ENCODE measurements at regions of chr21 and their contacts with region 1.

Region 1: GRCh38 chr21:17819114-17819876 is at the start of gene C21orf91:
- DNase-seq: peak; percentile 92
- H3K4me3 Mint-ChIP-seq: peak within 1 kb of the TSS; percentile 96
- H3K27ac Mint-ChIP-seq: peak within 1 kb of the TSS; percentile 98
- H3K4me1 Mint-ChIP-seq: peaks cover 39% of the 10 kb centered on the region
- H3K27me3 Mint-ChIP-seq: no peaks in the 10 kb centered on the region
- total RNA-seq, gene C21orf91: 25.6 to 25.8 TPM

Region 2: DNA sequence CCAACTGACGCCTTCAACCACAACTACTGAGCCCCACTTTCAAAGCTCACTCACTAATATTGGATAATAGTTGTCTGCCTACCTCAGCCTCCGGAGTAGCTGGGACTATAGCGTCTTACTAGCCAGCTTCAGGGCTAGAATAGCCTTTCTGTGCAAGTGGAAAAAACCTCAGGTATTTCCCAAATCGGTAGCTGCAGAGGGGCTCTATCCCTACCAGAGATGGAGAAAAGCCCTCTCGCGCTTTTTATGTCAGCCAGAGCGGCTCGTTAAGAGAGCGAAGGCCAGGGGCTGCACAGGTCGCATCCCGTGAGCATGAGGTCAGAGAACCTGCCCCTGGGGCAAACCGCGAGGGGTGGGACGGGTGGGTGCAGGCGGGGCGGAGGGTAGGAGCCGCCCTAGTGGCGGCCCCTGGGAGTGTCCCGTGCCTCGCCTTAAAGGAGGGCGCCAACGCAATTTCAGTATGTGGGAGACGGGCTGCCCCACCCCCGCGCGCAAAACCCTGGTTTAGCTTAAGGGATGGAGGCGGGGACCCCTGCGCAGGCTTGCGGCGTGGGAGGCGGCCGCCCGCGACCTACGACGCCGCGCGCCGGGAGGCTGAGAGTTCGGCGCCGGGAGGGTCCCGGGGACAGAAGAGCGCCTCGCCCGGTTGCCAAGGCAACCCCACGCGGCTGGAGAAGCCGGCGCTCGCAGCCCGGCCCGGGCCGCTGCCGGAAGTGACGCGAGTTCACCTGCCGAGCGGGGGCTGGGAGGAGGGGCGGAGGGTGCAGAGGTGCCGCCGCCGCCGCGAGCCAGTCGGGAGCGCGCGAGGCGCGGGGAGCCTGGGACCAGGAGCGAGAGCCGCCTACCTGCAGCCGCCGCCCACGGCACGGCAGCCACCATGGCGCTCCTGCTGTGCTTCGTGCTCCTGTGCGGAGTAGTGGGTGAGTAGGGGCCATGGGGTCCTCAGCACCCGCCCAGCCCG is 306.8 kb before region 1 on chr21 and contains the start of gene CXADR:
- CTCF ChIA-PET with region 1: no interaction called
- intact Hi-C with region 1: loop called (anchors 2 kb)
- DNase-seq: peak; percentile 81
- H3K4me3 Mint-ChIP-seq: peak within 1 kb of the TSS; percentile 80
- H3K27ac Mint-ChIP-seq: no peak within 1 kb of the TSS
- H3K4me1 Mint-ChIP-seq: peaks cover 14% of the 10 kb centered on the region
- H3K27me3 Mint-ChIP-seq: peaks cover 23% of the 10 kb centered on the region
- total RNA-seq, gene CXADR: 0.27 to 0.52 TPM

Region 3: GRCh38 chr21:17570786-17571185 is 248.5 kb before region 1 on chr21:
- CTCF ChIA-PET with region 1: no interaction called
- intact Hi-C with region 1: no loop called
- DNase-seq: no peak
- H3K4me3 Mint-ChIP-seq: no peak overlapping the region
- H3K27ac Mint-ChIP-seq: no peak overlapping the region
- H3K4me1 Mint-ChIP-seq: no peaks in the 10 kb centered on the region
- H3K27me3 Mint-ChIP-seq: peaks cover 4% of the 10 kb centered on the region

Region 4: DNA sequence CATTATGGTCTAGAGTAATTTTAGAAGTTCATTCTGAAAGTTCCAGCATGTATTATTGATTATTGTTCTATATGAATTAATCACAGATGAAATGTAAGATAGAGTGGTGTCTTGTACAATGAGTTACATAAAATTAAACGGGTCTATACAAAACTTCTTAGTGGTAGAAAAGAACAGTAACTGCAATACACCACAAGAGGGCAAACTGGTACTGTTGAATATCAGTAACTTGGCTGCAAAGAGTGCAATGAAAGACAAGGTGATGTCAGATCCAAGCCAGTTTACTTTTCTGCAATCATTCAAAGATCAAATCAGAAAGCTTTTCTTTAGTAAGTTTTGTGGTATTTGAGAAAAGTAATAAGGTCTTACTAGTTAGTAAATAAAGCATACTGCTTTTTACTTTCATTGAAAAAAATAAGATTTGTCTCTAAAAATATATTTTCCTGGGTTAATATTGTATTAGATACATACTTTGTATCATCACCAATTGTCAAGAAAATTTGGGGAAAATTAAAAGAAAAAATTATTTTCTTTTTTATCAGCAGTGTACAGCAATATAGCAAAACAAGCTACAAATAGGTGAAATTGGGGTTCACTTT is 140.2 kb before region 1 on chr21:
- CTCF ChIA-PET with region 1: interaction called, 4 read pairs
- intact Hi-C with region 1: loop called (anchors 2 kb)
- DNase-seq: no peak
- H3K4me3 Mint-ChIP-seq: no peak overlapping the region
- H3K27ac Mint-ChIP-seq: no peak overlapping the region
- H3K4me1 Mint-ChIP-seq: peaks cover 11% of the 10 kb centered on the region
- H3K27me3 Mint-ChIP-seq: no peaks in the 10 kb centered on the region

Region 5: DNA sequence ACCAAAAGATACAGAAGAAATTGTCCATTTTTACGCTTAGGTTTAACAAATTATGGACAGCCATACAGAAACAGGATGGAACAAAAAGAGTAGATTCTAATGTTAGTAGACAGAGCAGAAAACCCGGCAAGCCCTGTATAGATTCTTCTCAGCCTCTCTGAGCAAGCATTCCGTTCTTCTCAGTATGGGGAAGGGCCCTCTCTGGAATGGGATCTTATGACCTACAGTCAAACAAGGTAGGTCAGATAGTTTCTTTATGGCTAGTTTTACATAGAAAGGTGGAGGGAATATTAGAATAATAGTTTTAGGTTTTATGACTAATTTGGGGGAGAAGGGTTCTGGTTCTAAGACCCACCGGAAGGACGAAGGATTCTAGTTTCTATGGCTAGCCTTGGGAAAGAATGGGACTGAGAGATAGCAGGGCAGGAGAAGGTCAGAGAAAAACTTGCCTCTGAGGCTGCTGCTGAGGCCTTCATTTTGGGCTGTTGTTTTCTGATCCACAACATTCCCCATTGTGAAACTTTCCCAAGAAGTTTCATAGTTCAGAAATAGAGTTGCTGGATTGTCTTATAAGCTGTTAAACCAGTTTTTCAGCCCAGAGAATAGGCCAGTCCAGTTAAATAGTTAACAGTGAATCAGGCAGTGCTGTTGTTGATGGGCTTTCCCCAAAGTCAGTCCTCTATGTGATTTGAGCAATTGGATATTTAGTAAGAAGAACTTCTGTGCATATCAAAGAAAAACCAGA is 77.3 kb before region 1 on chr21:
- CTCF ChIA-PET with region 1: no interaction called
- intact Hi-C with region 1: loop called (anchors 2 kb)
- DNase-seq: no peak
- H3K4me3 Mint-ChIP-seq: no peak overlapping the region
- H3K27ac Mint-ChIP-seq: no peak overlapping the region
- H3K4me1 Mint-ChIP-seq: peaks cover 28% of the 10 kb centered on the region
- H3K27me3 Mint-ChIP-seq: no peaks in the 10 kb centered on the region

Region 6: DNA sequence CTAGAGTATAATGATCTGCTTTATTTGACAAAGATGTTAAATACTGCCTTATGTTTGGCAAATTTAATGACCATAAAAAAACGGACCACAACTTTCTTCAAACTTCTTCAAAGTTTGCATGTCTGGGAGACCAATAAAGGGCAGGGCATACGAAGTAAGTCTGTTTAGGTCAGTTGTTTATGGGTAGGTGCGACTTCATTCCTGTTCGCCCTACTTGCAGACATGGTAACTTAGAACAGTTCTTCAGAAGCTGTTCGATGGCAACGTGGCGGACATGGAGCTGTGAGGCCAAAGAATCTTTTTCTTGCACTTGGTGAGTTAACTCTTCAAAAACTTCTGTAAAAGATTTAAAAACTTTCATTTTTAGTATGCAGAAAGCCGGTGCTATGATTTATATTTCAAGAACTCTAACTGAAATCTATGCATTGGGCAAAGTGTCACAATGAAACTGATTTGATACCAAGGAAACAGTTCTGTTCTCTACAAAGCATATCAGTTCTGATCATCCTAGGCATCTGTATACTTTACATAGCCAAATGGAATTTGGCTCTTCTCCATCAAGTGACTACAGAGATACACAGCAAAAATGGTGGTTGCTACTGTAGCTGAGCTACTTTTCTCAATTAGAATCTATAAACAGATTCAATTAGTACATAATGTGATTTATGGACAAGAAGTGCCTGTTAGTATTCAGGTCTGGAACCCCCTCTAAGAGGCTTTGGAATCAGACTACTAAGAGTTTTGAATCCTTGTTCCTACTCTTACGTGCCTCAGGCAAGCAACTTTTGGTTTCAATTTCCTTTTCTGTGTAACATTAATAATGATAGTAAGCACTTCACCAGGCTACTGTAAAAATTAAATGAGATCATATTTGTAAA is 25.8 kb before region 1 on chr21:
- CTCF ChIA-PET with region 1: interaction called, 7 read pairs
- intact Hi-C with region 1: loop called (anchors 1 kb)
- DNase-seq: no peak
- H3K4me3 Mint-ChIP-seq: peak overlapping the region; percentile 53
- H3K27ac Mint-ChIP-seq: peak overlapping the region; percentile 89
- H3K4me1 Mint-ChIP-seq: peaks cover 62% of the 10 kb centered on the region
- H3K27me3 Mint-ChIP-seq: no peaks in the 10 kb centered on the region

Region 7: DNA sequence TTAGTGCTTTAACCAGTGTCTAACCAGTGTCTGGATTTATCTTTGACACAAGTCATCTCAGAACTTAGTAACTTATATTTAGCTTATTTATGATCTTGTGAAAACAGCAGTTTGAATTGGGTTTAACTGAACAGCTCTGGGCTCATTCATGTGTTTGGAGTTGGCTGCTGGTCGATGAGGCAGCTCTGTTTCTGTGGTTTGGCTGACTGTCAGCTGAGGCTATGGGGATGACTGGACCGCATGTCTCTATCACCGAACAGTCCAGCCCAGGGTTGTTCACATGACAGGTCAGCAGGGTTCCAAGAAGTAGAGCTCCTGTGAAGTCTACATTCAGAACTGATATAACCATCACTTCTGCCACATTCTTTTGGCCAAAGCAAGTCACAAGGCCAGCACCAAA is 28.9 kb after region 1 on chr21:
- CTCF ChIA-PET with region 1: no interaction called
- intact Hi-C with region 1: loop called (anchors 1 kb)
- DNase-seq: no peak
- H3K4me3 Mint-ChIP-seq: no peak overlapping the region
- H3K27ac Mint-ChIP-seq: no peak overlapping the region
- H3K4me1 Mint-ChIP-seq: no peaks in the 10 kb centered on the region
- H3K27me3 Mint-ChIP-seq: no peaks in the 10 kb centered on the region

Measured in activated naive CD4-positive, alpha-beta T cell treated with anti-CD3 and anti-CD28 coated beads for 36 hours (primary cell).